ENCODE measurements at regions of chr11 and their contacts with region 1.

Region 1: GRCh38 chr11:34565417-34566207 is 52.0 kb upstream of the ELF5 start:
- DNase-seq: peak; percentile 18
- ATAC-seq: no peak
- H3K4me3 ChIP-seq: no peak overlapping the region
- H3K27ac ChIP-seq: no peak overlapping the region
- H3K4me1 ChIP-seq: peaks cover under 1% of the 10 kb centered on the region
- H3K27me3 ChIP-seq: peaks cover 17% of the 10 kb centered on the region; the same call in 1 of the 2 replicates
- CTCF ChIP-seq: peak; percentile 79

Region 2: GRCh38 chr11:34773211-34773610 is 207.6 kb after region 1 on chr11:
- CTCF ChIA-PET with region 1: no interaction called
- POLR2A ChIA-PET with region 1: interaction called, 14 read pairs
- in situ Hi-C with region 1: no loop called
- intact Hi-C with region 1: no loop called
- DNase-seq: no peak
- ATAC-seq: no peak
- H3K4me3 ChIP-seq: no peak overlapping the region
- H3K27ac ChIP-seq: no peak overlapping the region
- H3K4me1 ChIP-seq: no peaks in the 10 kb centered on the region
- H3K27me3 ChIP-seq: no peaks in the 10 kb centered on the region
- CTCF ChIP-seq: no peak

Region 3: GRCh38 chr11:34988294-34989255 is 423.0 kb after region 1 on chr11:
- CTCF ChIA-PET with region 1: no interaction called
- POLR2A ChIA-PET with region 1: no interaction called
- in situ Hi-C with region 1: no loop called
- intact Hi-C with region 1: no loop called
- DNase-seq: no peak
- ATAC-seq: peak; percentile 58; the same call in 1 of the 2 replicates
- H3K4me3 ChIP-seq: no peak overlapping the region
- H3K27ac ChIP-seq: peak overlapping the region; percentile 71
- H3K4me1 ChIP-seq: peaks cover 27% of the 10 kb centered on the region
- H3K27me3 ChIP-seq: no peaks in the 10 kb centered on the region
- CTCF ChIP-seq: no peak

Measured in Panc1 (cell line).